Ascending aorta (tissue), 2 donors: ENCODE measurements at regions of chr12 and their contacts with region 1.

Region 1: DNA sequence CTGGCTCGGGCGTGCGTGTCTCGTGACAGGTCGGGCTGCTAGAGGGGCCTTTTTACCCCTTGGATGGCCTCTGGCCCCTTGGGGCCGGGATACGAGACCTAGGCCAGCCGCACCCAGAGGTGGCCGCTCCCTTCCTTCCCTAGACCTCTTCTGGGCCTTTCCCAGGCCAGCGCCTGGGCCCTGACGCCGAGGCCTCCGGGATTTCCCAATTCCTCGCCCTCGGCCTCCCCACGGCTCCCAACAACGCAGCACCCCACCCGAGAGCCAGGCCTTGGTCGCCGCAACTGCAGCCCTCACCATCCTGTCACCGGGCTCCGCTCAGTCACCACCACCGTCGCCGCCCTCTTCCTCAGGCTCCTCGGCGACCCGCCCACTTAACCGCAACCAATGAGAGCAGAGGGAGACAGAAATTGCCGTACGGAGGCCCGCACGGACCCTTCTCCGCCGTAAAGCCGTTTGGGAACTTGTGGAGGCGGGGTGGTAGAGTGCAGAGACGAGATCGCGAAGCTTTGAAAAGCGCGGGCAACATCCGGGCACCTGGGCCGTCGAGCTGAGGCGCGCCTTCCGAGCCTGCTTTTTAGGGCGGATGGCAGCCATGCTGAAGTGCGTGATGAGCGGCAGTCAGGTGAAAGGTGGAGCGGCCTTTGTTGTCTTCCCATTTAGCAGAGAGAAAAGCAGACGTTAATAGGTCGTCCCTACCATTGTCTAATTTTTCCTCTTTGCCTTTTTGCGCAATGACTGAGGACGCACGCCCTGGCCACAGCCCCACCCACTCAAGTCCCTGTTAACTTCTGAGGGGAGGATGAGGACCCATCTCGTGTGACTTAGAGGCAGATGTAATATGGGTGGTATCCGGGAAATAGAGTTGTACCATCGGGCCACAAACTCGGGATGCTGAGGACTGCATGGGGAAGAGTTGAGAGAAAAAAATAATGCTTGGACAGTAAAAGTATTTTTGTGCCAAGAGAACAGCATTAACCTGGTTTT is at the starts of genes RAD9B and VPS29:
- DNase-seq: peak; percentile 96 to 99
- H3K4me3 ChIP-seq: peak within 1 kb of the TSS; percentile 75 to 82
- H3K27ac ChIP-seq: peak within 1 kb of the TSS; percentile 92
- H3K4me1 ChIP-seq: peaks cover 7 to 21% of the 10 kb centered on the region in 2 donors
- H3K27me3 ChIP-seq: no peaks in the 10 kb centered on the region
- CTCF ChIP-seq: no peak
- total RNA-seq, gene RAD9B: not detected
- total RNA-seq, gene VPS29: 35.9 TPM

Region 2: GRCh38 chr12:110449799-110450497 is 52.1 kb before region 1 on chr12 and contains the start of gene ARPC3:
- intact Hi-C with region 1: loop called (anchors 2 kb)
- DNase-seq: peak; percentile 76 to 98
- H3K4me3 ChIP-seq: peak within 1 kb of the TSS; percentile 92 to 96
- H3K27ac ChIP-seq: peak within 1 kb of the TSS; percentile 92 to 98
- H3K4me1 ChIP-seq: peaks cover 4 to 17% of the 10 kb centered on the region in 2 donors
- H3K27me3 ChIP-seq: no peaks in the 10 kb centered on the region
- CTCF ChIP-seq: peak; percentile 90 to 95 (median 92)
- total RNA-seq, gene ARPC3: 76.5 TPM

Region 3: GRCh38 chr12:110613771-110614684 is 112.0 kb after region 1 on chr12 and contains the start of gene TCTN1:
- intact Hi-C with region 1: loop called (anchors 5 kb)
- DNase-seq: peak; percentile 92 to 98
- H3K4me3 ChIP-seq: peak within 1 kb of the TSS; percentile 63 to 70
- H3K27ac ChIP-seq: peak within 1 kb of the TSS; percentile 17 to 55
- H3K4me1 ChIP-seq: peaks cover 0 to 4% of the 10 kb centered on the region in 2 donors
- H3K27me3 ChIP-seq: no peaks in the 10 kb centered on the region
- CTCF ChIP-seq: no peak
- total RNA-seq, gene TCTN1: 28.4 TPM